ENCODE measurements at regions of chr2 and their contacts with region 1.

Region 1: GRCh38 chr2:230326453-230327417 is at the start of gene SP140L:
- DNase-seq: peak; percentile 89
- ATAC-seq: peak; percentile 97
- H3K4me3 Mint-ChIP-seq: peak within 1 kb of the TSS; percentile 89
- H3K27ac Mint-ChIP-seq: peak within 1 kb of the TSS; percentile 98
- H3K4me1 Mint-ChIP-seq: peaks cover 61% of the 10 kb centered on the region
- H3K27me3 Mint-ChIP-seq: no peaks in the 10 kb centered on the region
- total RNA-seq, gene SP140L: 40.1 to 43.4 TPM

Region 2: DNA sequence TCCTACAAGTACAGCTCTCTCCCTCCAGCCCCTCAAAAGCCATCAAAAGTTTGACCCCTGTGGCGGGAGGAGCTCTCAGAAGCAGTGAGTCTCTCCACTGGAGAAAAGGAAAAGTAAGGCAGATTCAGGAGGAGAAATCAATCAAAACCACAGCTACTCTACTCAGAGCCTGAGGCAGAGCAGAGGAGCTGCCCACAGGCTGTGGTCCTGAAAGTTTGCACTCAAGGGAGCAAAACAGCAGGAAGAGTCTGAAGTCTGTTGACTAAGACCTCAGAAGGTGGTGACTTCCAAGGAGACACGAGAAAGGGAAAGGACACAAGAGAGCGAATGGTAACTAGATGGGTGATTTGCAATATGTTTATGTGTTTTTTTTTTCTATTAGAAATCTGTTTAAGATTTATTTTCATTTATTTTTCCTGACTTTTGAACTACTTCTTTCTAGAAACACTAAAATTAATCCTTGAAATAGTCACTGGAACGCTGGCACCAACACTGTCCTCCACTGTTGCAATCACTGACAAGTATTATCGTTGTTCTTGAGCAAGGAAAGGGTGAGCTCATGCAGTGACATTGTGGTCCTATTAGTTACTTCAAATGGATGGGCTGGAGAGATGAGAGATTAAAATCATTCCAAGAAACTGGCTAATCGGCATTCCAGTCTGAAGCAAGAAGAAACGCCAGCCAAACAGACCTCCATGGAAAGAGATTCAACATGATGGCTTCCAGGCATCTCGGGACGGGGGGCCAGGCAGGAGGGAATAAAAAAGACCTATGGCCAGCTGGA is 1091.4 kb before region 1 on chr2:
- CTCF ChIA-PET with region 1: no interaction called
- POLR2A ChIA-PET with region 1: no interaction called
- intact Hi-C with region 1: no loop called
- DNase-seq: no peak
- ATAC-seq: no peak
- H3K4me3 Mint-ChIP-seq: no peak overlapping the region
- H3K27ac Mint-ChIP-seq: no peak overlapping the region
- H3K4me1 Mint-ChIP-seq: no peaks in the 10 kb centered on the region
- H3K27me3 Mint-ChIP-seq: no peaks in the 10 kb centered on the region

Region 3: GRCh38 chr2:230219419-230220331 is 107.1 kb before region 1 on chr2 and contains the start of gene SP110:
- CTCF ChIA-PET with region 1: interaction called, 3 read pairs
- POLR2A ChIA-PET with region 1: no interaction called
- intact Hi-C with region 1: loop called (anchors 2 kb)
- DNase-seq: peak; percentile 89
- ATAC-seq: peak; percentile 91
- H3K4me3 Mint-ChIP-seq: peak within 1 kb of the TSS; percentile 88
- H3K27ac Mint-ChIP-seq: peak within 1 kb of the TSS; percentile 97
- H3K4me1 Mint-ChIP-seq: peaks cover 66% of the 10 kb centered on the region
- H3K27me3 Mint-ChIP-seq: no peaks in the 10 kb centered on the region
- total RNA-seq, gene SP110: 96.2 to 111 TPM

Region 4: DNA sequence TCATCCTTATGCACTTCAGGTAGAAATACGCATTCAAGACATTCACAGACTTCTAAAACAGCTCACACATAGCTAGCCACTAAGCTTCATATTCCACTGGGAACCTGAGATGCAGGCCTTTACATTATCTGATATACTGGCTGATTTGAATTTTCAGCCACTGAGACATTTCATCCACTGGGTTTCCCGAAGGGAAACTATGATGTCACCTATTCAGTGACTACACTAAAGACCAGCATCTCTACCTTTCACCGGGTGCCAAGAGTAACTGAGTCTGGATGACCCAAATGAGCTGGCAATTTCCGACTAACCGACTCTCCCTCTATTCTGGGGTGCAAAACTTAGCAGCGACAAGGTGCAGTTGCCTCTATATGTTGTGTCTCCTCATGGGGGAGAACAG is 31.5 kb before region 1 on chr2:
- CTCF ChIA-PET with region 1: no interaction called
- POLR2A ChIA-PET with region 1: no interaction called
- intact Hi-C with region 1: no loop called
- DNase-seq: no peak
- ATAC-seq: no peak
- H3K4me3 Mint-ChIP-seq: no peak overlapping the region
- H3K27ac Mint-ChIP-seq: no peak overlapping the region
- H3K4me1 Mint-ChIP-seq: peaks cover 5% of the 10 kb centered on the region
- H3K27me3 Mint-ChIP-seq: no peaks in the 10 kb centered on the region

Region 5: DNA sequence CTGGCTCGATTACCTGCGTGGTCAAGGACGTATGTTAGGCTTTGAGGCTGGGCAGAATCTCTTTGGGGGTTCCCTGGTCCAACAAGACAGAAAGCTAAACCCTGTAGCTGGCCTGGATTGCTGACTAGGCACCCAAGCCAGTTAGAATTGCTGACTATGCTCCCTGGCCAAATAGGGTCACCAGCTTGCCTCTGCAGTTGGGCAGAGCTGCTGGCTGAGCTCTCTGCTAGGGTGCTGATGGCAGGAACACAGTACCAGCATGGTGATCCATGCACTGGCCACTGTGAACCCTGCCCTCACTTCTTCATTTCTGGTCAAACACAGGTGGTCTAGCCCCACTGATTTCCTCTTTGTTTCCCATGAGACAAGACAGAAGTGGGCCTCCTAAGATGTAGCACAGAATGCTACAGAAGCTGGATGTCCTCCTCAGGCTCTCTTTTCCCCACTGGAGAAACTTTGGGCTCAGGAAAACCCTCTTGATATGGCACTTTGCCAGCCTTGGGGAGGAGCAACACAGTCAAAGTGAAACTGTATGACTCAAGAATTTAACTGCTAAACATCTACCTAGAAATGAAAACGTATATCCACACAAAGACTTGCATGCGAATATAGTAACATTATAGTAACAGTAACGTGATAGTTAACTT is 21.0 kb after region 1 on chr2:
- CTCF ChIA-PET with region 1: interaction called, 6 read pairs
- POLR2A ChIA-PET with region 1: no interaction called
- intact Hi-C with region 1: loop called in 1 of 2 experiments (anchors 2 kb)
- DNase-seq: peak; percentile 65
- ATAC-seq: peak; percentile 60
- H3K4me3 Mint-ChIP-seq: peak overlapping the region; percentile 47
- H3K27ac Mint-ChIP-seq: peak overlapping the region; percentile 90
- H3K4me1 Mint-ChIP-seq: peaks cover 69% of the 10 kb centered on the region
- H3K27me3 Mint-ChIP-seq: no peaks in the 10 kb centered on the region

Region 6: GRCh38 chr2:230602562-230603230 is 276.0 kb after region 1 on chr2:
- CTCF ChIA-PET with region 1: interaction called, 3 read pairs
- POLR2A ChIA-PET with region 1: no interaction called
- intact Hi-C with region 1: loop called in 1 of 2 experiments (anchors 2 kb)
- DNase-seq: peak; percentile 71
- ATAC-seq: peak; percentile 83
- H3K4me3 Mint-ChIP-seq: peak overlapping the region; percentile 6
- H3K27ac Mint-ChIP-seq: peak overlapping the region; percentile 89
- H3K4me1 Mint-ChIP-seq: peaks cover 48% of the 10 kb centered on the region
- H3K27me3 Mint-ChIP-seq: no peaks in the 10 kb centered on the region